GM23248 (cell line): ENCODE measurements at regions of chr9 and their contacts with region 1.

Region 1: DNA sequence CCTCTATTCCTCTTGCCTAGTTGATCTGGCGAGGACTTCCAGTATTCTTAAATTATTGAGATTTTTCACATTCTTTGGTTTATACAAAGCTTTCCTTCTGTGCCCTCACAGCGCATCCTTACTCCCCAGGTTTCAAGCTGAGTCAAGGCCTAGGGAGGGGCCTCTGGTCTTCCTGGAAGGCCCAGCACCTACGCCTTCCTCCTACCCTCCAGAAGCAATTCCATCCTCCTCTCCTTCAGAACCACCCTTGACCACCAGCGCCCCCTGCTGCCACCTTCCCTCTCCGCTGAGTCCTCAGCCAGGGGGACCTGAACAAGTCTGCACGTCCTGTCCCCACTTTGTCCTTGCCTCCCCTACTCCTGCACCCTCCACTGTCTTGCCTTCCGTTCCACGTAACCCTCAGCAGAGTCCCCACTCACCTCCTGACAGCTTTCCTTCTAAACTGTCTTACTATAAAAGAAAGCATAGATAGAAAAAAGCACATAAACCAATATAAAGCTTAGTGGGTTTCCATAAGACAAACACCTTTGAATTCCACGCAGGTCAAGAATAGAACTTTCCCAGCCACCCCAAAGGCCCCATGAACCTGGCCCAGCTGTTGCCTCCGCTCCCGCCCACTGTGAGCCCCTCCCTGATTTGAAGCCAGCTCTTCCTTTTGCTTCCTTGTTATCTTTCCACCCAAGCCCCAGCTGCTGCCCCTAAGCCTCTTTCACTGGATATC is 63.0 kb upstream of the CTSL start:
- DNase-seq: peak; percentile 80
- H3K4me3 ChIP-seq: no peak overlapping the region
- H3K27ac ChIP-seq: no peak overlapping the region
- H3K4me1 ChIP-seq: no peaks in the 10 kb centered on the region
- H3K27me3 ChIP-seq: no peaks in the 10 kb centered on the region

Region 2: DNA sequence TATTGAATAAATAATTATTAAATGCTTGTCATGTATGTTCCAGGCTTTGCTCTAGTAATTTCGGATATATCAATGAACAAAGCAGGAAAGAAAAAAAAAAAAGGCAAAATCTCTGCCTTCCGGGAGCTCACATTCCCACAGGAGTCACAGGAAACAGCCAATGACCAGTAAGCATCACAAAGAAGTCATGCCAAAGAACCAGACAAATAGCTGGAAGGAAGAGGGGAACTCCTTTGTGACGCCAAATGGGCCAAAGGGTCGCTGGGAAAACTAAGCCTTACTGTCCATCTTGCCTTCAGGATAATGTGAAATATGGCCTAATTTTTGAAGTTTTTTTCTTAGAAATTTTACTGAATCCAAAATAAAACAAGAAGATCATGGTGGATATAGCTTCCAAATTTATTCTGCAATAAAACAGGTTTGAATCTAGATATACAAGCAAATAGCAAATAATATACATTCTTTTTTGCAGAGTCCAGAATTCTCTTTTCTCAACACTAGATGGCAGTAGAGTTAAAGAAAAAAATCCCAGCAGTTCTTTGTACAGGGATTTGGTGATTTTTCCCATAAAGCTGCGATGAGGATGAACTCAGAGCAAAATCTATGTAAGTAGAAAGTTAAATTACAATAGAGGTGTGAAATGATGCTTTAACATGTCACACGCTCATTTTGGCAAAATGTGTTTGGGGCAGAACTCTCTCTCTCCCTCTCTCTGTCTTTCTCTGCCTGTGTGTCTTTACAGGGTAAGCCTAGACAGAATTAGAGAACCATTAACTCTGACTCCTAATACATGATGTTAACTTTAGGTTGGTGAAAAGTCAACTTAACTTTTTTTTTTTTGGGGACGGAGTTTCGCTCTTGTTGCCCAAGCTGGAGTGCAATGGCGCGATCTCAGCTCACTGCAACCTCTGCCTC is 1248.7 kb before region 1 on chr9:
- in situ Hi-C with region 1: loop called (anchors 10 kb)
- DNase-seq: peak; percentile 55
- H3K4me3 ChIP-seq: no peak overlapping the region
- H3K27ac ChIP-seq: no peak overlapping the region
- H3K4me1 ChIP-seq: no peaks in the 10 kb centered on the region
- H3K27me3 ChIP-seq: no peaks in the 10 kb centered on the region

Region 3: DNA sequence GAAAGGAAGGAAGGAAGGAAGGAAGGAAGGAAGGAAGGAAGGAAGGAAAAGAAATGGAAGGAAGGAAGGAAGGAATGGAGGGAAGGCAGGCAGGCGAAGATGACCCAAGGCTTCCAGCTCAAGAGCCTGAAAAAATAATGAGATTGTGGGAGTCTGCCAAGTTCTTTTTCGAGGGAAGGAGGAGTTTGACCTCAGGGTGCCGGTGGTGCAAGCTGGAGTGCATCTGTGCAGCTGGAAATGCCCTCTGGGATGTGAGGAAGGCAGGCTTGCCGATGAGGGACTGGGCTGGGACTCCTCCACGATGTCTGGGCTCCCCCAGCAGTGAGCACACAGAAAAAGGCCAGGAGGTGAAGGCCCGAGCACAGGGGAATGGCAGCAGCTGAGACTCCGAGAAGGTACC is 320.2 kb before region 1 on chr9:
- in situ Hi-C with region 1: loop called (anchors 5 kb)
- DNase-seq: no peak
- H3K4me3 ChIP-seq: no peak overlapping the region
- H3K27ac ChIP-seq: no peak overlapping the region
- H3K4me1 ChIP-seq: peaks cover 4% of the 10 kb centered on the region; the same call in 1 of the 2 replicates
- H3K27me3 ChIP-seq: peaks cover 7% of the 10 kb centered on the region

Region 4: GRCh38 chr9:87516222-87516925 is 146.6 kb before region 1 on chr9:
- in situ Hi-C with region 1: no loop called
- DNase-seq: peak; percentile 4
- H3K4me3 ChIP-seq: no peak overlapping the region
- H3K27ac ChIP-seq: no peak overlapping the region
- H3K4me1 ChIP-seq: no peaks in the 10 kb centered on the region
- H3K27me3 ChIP-seq: no peaks in the 10 kb centered on the region